Activated B cell treated with CpG ODN at 0.5 μM for 24 hours (primary cell): ENCODE measurements at regions of chr5 and their contacts with region 1.

Region 1: GRCh38 chr5:134236318-134236717 is 10.4 kb upstream of the PPP2CA start:
- DNase-seq: no peak
- ATAC-seq: no peak
- H3K4me3 Mint-ChIP-seq: no peak overlapping the region
- H3K27ac Mint-ChIP-seq: no peak overlapping the region
- H3K4me1 Mint-ChIP-seq: peaks cover 8% of the 10 kb centered on the region
- H3K27me3 Mint-ChIP-seq: no peaks in the 10 kb centered on the region
- CTCF ChIP-seq: no peak

Region 2: DNA sequence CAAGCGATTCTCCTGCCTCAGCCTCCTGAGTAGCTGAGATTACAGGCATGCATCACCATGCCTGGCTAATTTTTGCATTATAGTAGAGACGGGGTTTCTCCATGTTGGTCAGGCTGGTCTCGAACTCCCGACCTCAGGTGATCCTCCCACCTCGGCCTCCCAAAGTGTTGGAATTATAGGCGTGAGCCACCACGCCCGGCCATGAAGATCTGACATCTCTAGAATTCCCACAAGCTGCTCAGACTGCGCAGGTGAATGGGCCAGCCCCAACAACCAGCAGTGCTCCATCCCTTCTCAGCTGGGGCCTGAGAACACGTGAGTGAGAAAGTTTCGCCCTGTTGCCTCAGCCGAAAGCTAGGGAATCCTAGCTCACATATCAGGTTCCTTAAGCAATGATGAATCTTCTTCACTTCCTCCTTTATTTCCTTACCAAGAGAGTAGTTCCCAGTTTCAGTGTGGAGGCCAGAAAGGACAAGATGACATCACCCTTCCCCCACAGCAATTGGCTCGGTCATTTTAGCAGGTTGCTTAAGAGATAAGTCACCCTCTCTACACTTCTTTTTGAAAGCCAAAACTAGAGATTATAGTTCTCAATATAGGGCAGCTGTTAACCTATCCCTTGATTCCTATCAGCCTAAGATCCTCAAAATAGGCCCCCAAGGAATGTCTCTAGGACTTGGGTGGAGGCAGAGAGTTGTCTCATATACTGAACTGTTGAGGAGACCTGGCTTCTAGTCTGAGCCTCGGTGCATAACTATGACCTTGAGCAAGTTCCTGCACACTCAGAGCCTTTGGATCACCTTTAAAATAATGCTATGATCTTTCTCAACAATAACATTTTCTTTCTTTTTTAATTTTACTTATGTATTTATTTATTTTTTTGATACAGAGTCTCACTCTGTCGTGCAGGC is 13.4 kb after region 1 on chr5:
- CTCF ChIA-PET with region 1: no interaction called
- POLR2A ChIA-PET with region 1: no interaction called
- intact Hi-C with region 1: no loop called
- DNase-seq: no peak
- ATAC-seq: no peak
- H3K4me3 Mint-ChIP-seq: no peak overlapping the region
- H3K27ac Mint-ChIP-seq: no peak overlapping the region
- H3K4me1 Mint-ChIP-seq: no peaks in the 10 kb centered on the region
- H3K27me3 Mint-ChIP-seq: peaks cover 4% of the 10 kb centered on the region
- CTCF ChIP-seq: no peak

Region 3: DNA sequence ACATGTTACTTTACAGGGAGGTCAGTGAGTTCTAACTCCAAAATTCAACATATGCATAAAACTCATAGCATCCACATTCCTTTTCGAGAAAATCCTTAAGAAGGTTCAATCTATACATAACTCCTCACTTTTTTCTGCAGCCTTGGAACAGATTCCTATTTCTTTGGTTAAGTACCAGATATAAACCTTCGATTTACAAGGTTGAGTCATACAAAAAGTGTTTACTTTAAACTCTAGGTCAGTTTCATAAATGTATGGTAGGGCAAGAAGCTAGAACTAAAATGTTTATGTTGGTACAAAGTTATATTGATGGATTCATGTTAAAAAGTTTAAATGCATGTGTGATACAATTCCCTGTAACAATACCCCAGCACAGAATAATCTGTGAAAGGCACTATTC is 156.0 kb after region 1 on chr5:
- CTCF ChIA-PET with region 1: no interaction called
- POLR2A ChIA-PET with region 1: interaction called, 13 read pairs
- intact Hi-C with region 1: no loop called
- DNase-seq: no peak
- ATAC-seq: no peak
- H3K4me3 Mint-ChIP-seq: no peak overlapping the region
- H3K27ac Mint-ChIP-seq: no peak overlapping the region
- H3K4me1 Mint-ChIP-seq: no peaks in the 10 kb centered on the region
- H3K27me3 Mint-ChIP-seq: no peaks in the 10 kb centered on the region
- CTCF ChIP-seq: no peak